Activated CD4-positive, alpha-beta T cell treated with anti-CD3 and anti-CD28 coated beads for 36 hours (primary cell): ENCODE measurements at regions of chr20 and their contacts with region 1.

Region 1: GRCh38 chr20:48769069-48769879 is 58.5 kb downstream of the PREX1 start:
- DNase-seq: peak; percentile 96
- ATAC-seq: peak; percentile 90
- H3K4me3 Mint-ChIP-seq: peak overlapping the region; percentile 48
- H3K27ac Mint-ChIP-seq: peak overlapping the region; percentile 81
- H3K4me1 Mint-ChIP-seq: peaks cover 80% of the 10 kb centered on the region
- H3K27me3 Mint-ChIP-seq: no peaks in the 10 kb centered on the region

Region 2: GRCh38 chr20:47487175-47487917 is 1281.9 kb before region 1 on chr20:
- CTCF ChIA-PET with region 1: no interaction called
- POLR2A ChIA-PET with region 1: no interaction called
- intact Hi-C with region 1: loop called in 1 of 2 experiments (anchors 5 kb)
- DNase-seq: peak; percentile 78
- ATAC-seq: peak; percentile 88
- H3K4me3 Mint-ChIP-seq: peak overlapping the region; percentile 26
- H3K27ac Mint-ChIP-seq: peak overlapping the region; percentile 99
- H3K4me1 Mint-ChIP-seq: peaks cover 80% of the 10 kb centered on the region
- H3K27me3 Mint-ChIP-seq: no peaks in the 10 kb centered on the region

Region 3: GRCh38 chr20:48538420-48539203 is 230.7 kb before region 1 on chr20:
- CTCF ChIA-PET with region 1: no interaction called
- POLR2A ChIA-PET with region 1: no interaction called
- intact Hi-C with region 1: no loop called
- DNase-seq: no peak
- ATAC-seq: no peak
- H3K4me3 Mint-ChIP-seq: no peak overlapping the region
- H3K27ac Mint-ChIP-seq: no peak overlapping the region
- H3K4me1 Mint-ChIP-seq: no peaks in the 10 kb centered on the region
- H3K27me3 Mint-ChIP-seq: peaks cover 5% of the 10 kb centered on the region

Region 4: DNA sequence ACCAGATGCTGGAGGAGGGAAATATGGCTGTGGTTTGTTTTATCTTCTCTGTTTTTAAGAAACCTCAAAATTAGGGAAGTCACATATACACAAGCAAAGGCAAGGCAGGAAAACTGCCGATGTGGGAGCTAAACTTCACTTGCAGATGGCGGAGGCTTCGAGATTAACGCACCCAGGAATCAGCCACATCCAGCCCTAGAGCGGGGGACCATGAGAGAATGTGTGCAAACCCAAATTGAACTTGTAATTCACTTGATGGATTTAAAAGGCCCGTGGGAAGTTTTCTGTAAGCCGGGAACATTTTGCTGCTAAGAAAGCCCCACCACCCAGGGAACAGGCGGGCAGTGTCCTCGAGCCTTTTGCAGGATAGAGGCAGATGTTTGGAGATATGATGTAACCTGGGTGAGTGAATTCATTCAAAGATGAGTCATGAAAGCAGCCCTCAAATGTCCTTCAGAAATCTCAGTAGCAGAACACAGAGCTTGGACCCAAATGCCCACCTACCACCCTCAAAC is 18.6 kb after region 1 on chr20:
- CTCF ChIA-PET with region 1: interaction called, 3 read pairs
- POLR2A ChIA-PET with region 1: interaction called, 6 read pairs
- intact Hi-C with region 1: loop called (anchors 1 kb)
- DNase-seq: no peak
- ATAC-seq: no peak
- H3K4me3 Mint-ChIP-seq: no peak overlapping the region
- H3K27ac Mint-ChIP-seq: peak overlapping the region; percentile 16
- H3K4me1 Mint-ChIP-seq: peaks cover 58% of the 10 kb centered on the region
- H3K27me3 Mint-ChIP-seq: no peaks in the 10 kb centered on the region

Region 5: GRCh38 chr20:48846498-48847485 is 77.5 kb after region 1 on chr20:
- CTCF ChIA-PET with region 1: no interaction called
- POLR2A ChIA-PET with region 1: no interaction called
- intact Hi-C with region 1: loop called in 1 of 2 experiments (anchors 1 kb)
- DNase-seq: peak; percentile 85
- ATAC-seq: peak; percentile 93
- H3K4me3 Mint-ChIP-seq: no peak overlapping the region
- H3K27ac Mint-ChIP-seq: peak overlapping the region; percentile 89
- H3K4me1 Mint-ChIP-seq: peaks cover 23% of the 10 kb centered on the region
- H3K27me3 Mint-ChIP-seq: no peaks in the 10 kb centered on the region